IMR-90 (cell line): ENCODE measurements at regions of chr12 and their contacts with region 1.

Region 1: DNA sequence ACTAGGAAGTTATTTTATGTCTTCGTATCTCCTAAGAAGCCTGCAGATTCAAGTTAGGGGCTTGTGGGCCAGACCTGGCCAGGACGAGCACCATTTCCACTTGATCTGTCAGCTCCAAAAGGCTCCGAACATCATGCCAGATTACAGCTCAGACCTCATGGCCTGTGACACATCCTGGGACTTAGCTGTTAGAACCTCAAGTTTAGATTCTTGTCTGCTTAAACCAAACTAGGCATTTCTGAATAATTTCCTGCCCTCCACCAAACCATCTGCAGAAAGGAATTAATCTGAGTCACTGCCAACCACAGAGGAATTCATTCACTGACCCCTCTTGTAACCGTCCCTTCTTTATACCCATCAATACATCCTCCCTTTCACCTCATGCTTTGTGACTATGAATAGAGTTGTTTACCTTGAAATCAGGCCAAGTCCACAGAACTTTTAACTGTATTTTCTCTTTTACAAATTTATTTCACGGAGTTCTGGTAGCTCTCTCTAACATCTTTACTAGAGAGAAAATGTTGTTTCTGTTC is 120.3 kb downstream of the FBXL14 start:
- DNase-seq: peak; percentile 99
- ATAC-seq: peak; percentile 77
- H3K4me3 ChIP-seq: peak overlapping the region; percentile 5; the same call in 1 of the 2 replicates
- H3K27ac ChIP-seq: peak overlapping the region; percentile 93
- H3K4me1 ChIP-seq: peaks cover 15% of the 10 kb centered on the region
- H3K27me3 ChIP-seq: no peaks in the 10 kb centered on the region
- CTCF ChIP-seq: no peak
- POLR2A ChIP-seq: peak; percentile 10; the same call in 1 of the 2 replicates
- RAD21 ChIP-seq: peak; percentile 39

Region 2: DNA sequence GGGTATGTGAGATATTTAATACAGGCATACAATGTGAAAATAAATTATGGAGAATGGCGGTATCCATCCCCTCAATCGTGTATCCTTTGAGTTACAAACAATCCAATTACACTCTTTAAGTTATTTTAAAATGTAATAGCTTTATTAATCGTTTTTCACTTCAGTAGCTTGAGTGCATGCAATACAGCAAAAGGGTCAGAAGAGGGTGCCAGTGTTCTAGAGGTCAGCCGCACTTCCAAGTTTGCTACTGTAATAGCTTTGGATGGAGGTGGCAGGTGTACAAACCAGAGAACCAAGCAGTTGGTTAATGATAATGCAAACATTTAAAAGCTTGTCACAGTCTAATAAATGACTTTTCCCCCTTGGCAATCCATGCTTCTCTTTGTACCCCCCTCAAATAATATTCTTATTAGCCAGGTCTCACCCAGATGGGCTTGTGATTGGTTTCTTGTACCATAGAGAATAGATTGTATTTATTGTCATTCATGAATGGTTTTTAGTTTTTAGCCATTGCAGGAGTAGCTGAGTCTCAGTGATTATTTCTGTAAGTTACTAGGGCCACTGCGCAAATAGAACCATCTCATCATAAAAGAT is 356.0 kb before region 1 on chr12:
- CTCF ChIA-PET with region 1: interaction called, 11 read pairs
- POLR2A ChIA-PET with region 1: no interaction called
- dilution Hi-C with region 1: no loop called
- in situ Hi-C with region 1: no loop called
- intact Hi-C with region 1: no loop called
- DNase-seq: peak; percentile 79
- ATAC-seq: peak; percentile 78
- H3K4me3 ChIP-seq: no peak overlapping the region
- H3K27ac ChIP-seq: no peak overlapping the region
- H3K4me1 ChIP-seq: peaks cover 3% of the 10 kb centered on the region
- H3K27me3 ChIP-seq: no peaks in the 10 kb centered on the region
- CTCF ChIP-seq: peak; percentile 90
- POLR2A ChIP-seq: no peak
- RAD21 ChIP-seq: peak; percentile 94

Region 3: DNA sequence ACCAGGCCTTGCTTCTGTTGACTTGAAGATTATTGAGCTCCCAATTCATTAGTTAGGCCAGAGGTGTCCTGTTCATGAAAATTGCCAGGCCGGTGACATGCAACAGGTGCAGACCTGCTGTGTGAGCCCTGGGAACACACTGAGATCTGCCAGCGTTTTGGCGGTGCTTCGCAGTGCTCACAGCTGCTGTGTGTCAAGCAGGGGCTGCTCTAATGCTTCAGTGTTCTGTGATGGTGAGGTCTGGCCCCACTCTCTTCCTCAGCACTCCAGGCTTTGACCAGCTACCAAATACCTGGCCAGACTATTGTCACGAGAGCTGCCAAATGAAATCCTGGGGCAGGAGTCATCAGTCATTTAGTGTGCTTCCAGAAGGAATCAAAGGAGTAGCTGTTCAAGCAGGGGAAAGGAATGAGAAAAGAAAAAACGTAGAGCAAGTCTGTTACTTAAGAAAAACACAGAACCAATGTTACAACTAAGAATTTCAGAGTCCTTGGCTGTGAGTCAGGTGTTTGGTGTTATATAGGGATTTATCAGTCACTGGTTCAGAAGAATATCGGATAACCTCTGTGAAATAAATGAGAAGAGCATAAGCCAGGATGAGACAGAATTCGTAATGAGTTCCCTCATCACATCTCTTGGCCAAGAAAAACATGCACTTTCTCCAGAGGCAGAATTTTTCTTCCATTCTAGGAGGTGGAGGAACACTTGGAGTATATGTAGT is 30.5 kb before region 1 on chr12:
- CTCF ChIA-PET with region 1: no interaction called
- POLR2A ChIA-PET with region 1: no interaction called
- dilution Hi-C with region 1: no loop called
- in situ Hi-C with region 1: no loop called
- intact Hi-C with region 1: loop called (anchors 2 kb)
- DNase-seq: peak; percentile 96
- ATAC-seq: peak; percentile 81
- H3K4me3 ChIP-seq: peak overlapping the region; percentile 17; the same call in 1 of the 2 replicates
- H3K27ac ChIP-seq: peak overlapping the region; percentile 10; the same call in 1 of the 2 replicates
- H3K4me1 ChIP-seq: peaks cover 16% of the 10 kb centered on the region
- H3K27me3 ChIP-seq: no peaks in the 10 kb centered on the region
- CTCF ChIP-seq: no peak
- POLR2A ChIP-seq: no peak
- RAD21 ChIP-seq: no peak

Region 4: DNA sequence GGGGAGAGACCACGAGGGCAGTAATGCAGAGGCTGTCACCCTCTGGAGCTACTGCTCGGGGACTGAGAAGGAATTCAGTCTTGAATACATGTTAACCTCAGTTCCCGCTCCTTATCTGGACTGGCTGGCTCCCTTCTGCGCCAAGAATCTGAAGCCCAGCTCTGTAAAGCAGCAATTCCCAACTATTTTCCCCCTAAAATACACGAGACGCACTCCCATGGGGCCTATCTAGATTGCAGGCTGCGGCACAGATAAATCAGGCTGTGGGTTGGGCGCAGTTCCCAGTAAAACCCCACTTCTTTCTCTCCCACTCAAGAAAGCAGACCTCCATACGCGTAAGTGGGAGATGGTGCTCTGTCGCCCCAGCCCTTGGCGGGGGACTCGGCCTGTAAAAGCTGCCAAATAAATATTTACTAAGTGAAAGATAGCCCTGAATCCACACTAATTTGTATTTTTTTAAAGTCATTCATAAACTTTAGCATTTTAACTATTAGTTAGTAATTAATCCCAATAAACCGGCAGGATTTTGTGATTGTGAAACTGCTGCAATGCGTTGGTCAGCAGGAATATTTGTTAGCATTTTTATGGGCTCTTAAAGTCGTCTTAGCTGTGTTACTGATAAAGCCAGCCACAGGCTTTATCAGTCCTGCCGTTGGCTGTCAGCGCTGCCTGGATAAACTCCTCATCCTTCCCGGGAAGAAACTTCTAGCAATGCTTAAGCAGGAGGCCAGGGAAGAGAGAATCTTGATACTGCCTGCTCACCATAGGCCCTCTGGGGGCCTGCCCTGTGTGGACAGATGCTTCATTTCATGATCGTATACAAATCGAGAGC is 102.5 kb after region 1 on chr12:
- CTCF ChIA-PET with region 1: no interaction called
- POLR2A ChIA-PET with region 1: no interaction called
- dilution Hi-C with region 1: no loop called
- in situ Hi-C with region 1: no loop called
- intact Hi-C with region 1: loop called (anchors 2 kb)
- DNase-seq: peak; percentile 85
- ATAC-seq: peak; percentile 68
- H3K4me3 ChIP-seq: peak overlapping the region; percentile 5; the same call in 1 of the 2 replicates
- H3K27ac ChIP-seq: peak overlapping the region; percentile 78
- H3K4me1 ChIP-seq: peaks cover 30% of the 10 kb centered on the region
- H3K27me3 ChIP-seq: no peaks in the 10 kb centered on the region
- CTCF ChIP-seq: no peak
- POLR2A ChIP-seq: no peak
- RAD21 ChIP-seq: peak; percentile 39